ENCODE measurements at regions of chr1 and their contacts with region 1.

Region 1: DNA sequence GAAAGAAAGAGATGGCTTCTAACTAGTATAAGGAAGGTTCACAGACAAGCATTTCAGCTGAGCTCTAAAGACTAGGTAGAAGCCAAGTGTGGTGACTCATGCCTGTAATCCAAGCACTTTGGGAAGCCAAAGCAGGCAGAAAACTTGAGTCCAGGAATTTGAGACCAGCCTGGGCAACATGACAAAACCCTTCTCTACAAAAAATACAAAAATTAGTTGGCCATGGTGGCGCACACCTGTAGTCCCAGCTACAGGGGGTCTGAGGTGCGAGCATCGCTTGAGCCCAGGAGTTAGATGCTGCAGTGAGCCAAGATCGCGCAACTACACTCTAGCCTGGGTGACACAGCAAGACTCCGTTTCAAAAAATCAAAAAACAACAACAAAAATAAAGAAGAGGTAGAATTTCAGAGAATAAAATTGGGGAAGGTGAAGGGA is 27.8 kb downstream of the FBXO42 start:
- DNase-seq: no peak
- ATAC-seq: no peak
- H3K4me3 ChIP-seq: no peak overlapping the region
- H3K4me3 Mint-ChIP-seq: no peak overlapping the region
- H3K27ac ChIP-seq: no peak overlapping the region
- H3K27ac Mint-ChIP-seq: peak overlapping the region; percentile 63
- H3K4me1 ChIP-seq: peaks cover 6% of the 10 kb centered on the region
- H3K4me1 Mint-ChIP-seq: peaks cover 31% of the 10 kb centered on the region
- H3K27me3 ChIP-seq: no peaks in the 10 kb centered on the region
- H3K27me3 Mint-ChIP-seq: no peaks in the 10 kb centered on the region
- CTCF ChIP-seq: no peak

Region 2: DNA sequence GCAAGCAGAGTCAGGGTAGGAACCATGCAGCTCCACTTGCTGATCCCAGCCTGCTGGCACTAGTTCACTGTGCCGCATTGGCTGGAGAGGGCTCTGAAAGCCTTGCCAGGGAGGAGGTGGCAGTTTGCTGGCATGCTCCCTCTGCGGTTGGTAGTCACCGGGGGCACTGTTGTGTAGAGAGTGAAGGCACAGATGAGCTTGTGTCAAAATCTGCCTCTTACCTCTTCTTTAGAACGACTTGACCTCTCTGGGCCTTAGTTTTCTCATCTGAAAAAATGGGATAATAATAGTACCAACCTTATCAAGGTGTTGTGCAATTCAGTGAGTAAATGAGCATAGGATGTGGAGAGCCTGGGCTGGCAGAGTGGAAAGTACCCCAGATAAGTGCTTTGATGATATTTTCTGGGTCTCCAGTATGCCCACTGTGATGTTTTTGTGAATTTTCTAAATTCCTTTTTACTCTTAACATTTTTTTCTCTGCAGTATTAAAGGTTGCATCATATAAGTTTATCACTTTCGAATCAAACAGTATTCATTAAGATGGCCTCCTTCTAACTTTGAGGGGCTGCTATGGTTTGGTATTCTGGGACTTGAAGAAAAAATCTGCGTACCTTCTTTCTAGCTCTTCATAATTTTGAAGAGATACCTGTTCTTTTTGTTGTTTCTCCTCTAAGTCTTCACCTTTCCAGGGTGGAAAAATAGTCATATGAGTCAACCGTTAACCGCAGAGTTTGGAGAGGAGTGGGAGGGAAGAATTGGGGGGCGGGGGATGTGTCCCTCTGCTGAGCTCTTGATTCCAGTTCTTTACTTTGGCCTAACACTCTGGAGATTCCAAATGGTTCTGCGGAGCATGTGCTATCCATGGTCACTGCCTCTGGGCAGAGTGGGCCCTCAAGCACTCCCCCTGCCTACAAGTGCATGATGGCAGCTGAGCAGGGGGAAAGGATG is 69.4 kb after region 1 on chr1:
- CTCF ChIA-PET with region 1: no interaction called
- POLR2A ChIA-PET with region 1: no interaction called
- intact Hi-C with region 1: loop called in 1 of 2 experiments (anchors 2 kb)
- DNase-seq: no peak
- ATAC-seq: no peak
- H3K4me3 ChIP-seq: no peak overlapping the region
- H3K4me3 Mint-ChIP-seq: no peak overlapping the region
- H3K27ac ChIP-seq: no peak overlapping the region
- H3K27ac Mint-ChIP-seq: peak overlapping the region; percentile 13
- H3K4me1 ChIP-seq: peaks cover 31% of the 10 kb centered on the region
- H3K4me1 Mint-ChIP-seq: peaks cover 39% of the 10 kb centered on the region
- H3K27me3 ChIP-seq: no peaks in the 10 kb centered on the region
- H3K27me3 Mint-ChIP-seq: no peaks in the 10 kb centered on the region
- CTCF ChIP-seq: no peak

Measured in CD8-positive, alpha-beta T cell (primary cell).